ENCODE measurements at regions of chr5 and their contacts with region 1.

Region 1: DNA sequence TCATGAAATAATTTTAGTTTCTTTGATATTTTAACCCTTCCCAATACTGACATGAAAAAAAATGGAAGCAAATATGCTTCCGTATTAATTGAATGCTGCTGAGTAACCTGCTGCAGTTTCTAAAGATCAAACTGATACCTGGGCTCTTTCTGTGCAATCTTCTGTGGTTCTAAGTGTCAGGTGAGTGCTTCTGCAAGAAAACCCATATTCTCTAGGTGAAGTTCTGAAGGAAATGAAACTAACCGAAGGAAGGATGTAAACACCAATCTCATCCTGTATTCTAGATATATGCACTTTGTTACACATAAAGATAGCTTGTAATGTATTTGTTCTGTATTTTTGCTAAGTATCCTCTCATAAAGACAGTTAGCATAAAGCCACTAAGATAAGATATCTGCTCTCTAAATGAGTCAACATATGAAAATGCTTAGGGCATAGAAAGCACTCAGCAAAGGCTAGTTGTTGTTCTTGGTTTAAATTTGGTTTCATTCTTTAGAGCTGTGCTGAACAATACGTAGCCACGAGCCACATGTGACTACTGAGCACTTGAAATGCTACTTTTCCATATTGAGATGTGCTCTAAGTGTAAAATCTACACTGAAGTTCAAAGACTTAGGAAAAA is 52.0 kb downstream of the ITGA2 start:
- DNase-seq: peak; percentile 48
- H3K4me3 Mint-ChIP-seq: peak overlapping the region; percentile 61
- H3K27ac Mint-ChIP-seq: peak overlapping the region; percentile 87
- H3K4me1 Mint-ChIP-seq: peaks cover 82% of the 10 kb centered on the region
- H3K27me3 Mint-ChIP-seq: no peaks in the 10 kb centered on the region

Region 2: GRCh38 chr5:52989781-52990527 is 51.2 kb before region 1 on chr5:
- CTCF ChIA-PET with region 1: interaction called, 3 read pairs
- POLR2A ChIA-PET with region 1: interaction called, 16 read pairs
- DNase-seq: peak; percentile 54
- H3K4me3 Mint-ChIP-seq: peak overlapping the region; percentile 79
- H3K27ac Mint-ChIP-seq: peak overlapping the region; percentile 17
- H3K4me1 Mint-ChIP-seq: peaks cover 57% of the 10 kb centered on the region
- H3K27me3 Mint-ChIP-seq: peaks cover 19% of the 10 kb centered on the region

Region 3: GRCh38 chr5:53008751-53009150 is 32.4 kb before region 1 on chr5:
- CTCF ChIA-PET with region 1: no interaction called
- POLR2A ChIA-PET with region 1: interaction called, 14 read pairs
- DNase-seq: peak; percentile 58
- H3K4me3 Mint-ChIP-seq: no peak overlapping the region
- H3K27ac Mint-ChIP-seq: peak overlapping the region; percentile 60
- H3K4me1 Mint-ChIP-seq: peaks cover 83% of the 10 kb centered on the region
- H3K27me3 Mint-ChIP-seq: peaks cover 19% of the 10 kb centered on the region

Region 4: DNA sequence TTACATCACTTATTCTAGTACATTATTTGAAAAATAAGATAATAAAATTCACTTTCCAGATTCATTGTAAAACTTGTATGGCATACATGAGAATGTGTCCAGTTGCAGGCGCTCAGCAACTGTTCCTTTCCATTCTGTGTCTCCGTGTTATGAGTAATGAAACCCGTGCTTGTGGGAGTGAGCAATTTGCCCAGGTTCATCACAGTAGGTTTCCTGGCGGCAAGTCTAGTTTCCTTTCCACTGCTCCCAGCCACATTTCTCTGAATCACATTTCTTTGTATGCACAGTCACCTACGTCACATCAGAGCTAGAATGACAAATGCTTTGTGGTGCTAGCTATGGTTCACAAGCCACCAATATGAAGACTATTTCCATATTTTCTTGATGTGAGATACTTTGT is 28.4 kb after region 1 on chr5:
- CTCF ChIA-PET with region 1: interaction called, 6 read pairs
- POLR2A ChIA-PET with region 1: interaction called, 15 read pairs
- DNase-seq: peak; percentile 82
- H3K4me3 Mint-ChIP-seq: peak overlapping the region; percentile 1
- H3K27ac Mint-ChIP-seq: peak overlapping the region; percentile 70
- H3K4me1 Mint-ChIP-seq: peaks cover 29% of the 10 kb centered on the region
- H3K27me3 Mint-ChIP-seq: no peaks in the 10 kb centered on the region

Region 5: DNA sequence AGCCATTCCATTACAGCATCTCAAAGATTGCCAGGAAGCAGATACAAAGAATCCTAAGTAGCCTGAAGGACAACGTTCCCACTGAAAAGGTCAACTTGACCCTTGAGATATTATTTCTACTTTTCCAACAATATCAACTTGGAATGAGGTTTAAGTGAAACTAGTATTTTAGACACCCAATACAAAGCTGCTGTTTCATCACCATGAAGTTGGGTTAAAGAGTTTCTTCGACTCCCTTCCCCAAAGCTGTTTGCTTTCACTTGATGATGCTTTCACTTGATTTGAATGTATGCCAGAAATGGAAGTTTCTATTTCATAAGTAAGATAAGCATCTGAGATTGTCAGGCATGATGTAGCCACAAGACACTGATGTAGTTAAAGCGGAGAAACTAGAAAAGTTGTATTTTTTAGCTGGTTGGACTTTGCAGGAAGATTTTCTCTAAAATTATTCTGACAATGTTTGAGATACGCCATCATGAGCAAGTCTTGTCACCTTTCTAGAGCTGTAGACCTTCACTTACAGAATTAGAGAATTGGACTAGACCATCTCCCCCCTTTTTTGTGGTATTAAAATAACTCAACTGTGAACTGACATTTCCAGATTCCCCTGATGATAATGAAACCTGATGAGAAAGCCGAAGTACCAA is 48.3 kb after region 1 on chr5:
- CTCF ChIA-PET with region 1: interaction called, 3 read pairs
- POLR2A ChIA-PET with region 1: interaction called, 12 read pairs
- DNase-seq: no peak
- H3K4me3 Mint-ChIP-seq: peak overlapping the region; percentile 19
- H3K27ac Mint-ChIP-seq: peak overlapping the region; percentile 54
- H3K4me1 Mint-ChIP-seq: peaks cover 31% of the 10 kb centered on the region
- H3K27me3 Mint-ChIP-seq: peaks cover 5% of the 10 kb centered on the region

Measured in activated CD4-positive, alpha-beta memory T cell treated with anti-CD3 and anti-CD28 coated beads, Interleukin-2, amount 10 ng/mL, durations not matched to agents 7 days and 5 days (primary cell).